ENCODE measurements at regions of chr7 and their contacts with region 1.

Region 1: DNA sequence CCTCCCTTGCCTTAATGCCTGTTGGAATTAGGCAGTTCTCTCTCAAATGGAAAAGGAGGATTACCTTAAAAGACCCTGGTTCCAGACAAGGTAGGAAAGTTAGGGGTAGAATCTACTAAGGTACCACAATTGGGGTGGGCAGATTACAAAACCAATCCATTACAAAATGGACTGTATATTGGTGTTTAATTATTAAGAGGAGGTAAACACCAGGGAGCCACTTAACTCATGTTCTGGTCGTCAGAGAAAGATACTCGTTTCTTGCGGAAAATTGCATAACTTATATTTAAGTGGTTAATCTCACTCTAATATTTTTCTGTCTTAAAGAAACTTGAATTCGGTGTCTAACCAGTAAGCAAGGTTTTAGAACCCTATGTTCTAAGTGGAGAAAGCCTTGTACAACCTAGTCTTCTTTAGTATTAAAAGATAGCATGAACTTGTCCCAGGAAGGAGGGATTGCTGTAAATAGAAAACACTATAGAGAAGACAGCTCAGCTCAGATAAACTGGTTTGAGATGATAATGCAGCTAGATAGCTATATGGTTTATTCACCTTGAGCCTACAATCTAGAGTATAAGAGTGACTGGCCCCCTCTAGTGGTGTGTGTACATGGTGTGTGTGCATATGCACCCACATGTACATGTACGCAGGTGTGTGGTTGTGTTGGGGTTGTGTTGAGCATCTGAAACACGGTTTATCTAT is 58.0 kb upstream of the STRIP2 start:
- DNase-seq: peak in 2 of 4 donors; percentile 15 to 38
- ATAC-seq: peak; percentile 77
- H3K4me3 ChIP-seq: no peak overlapping the region
- H3K27ac ChIP-seq: peak overlapping the region in 1 of 2 donors; percentile 60
- H3K4me1 ChIP-seq: peaks cover 0 to 16% of the 10 kb centered on the region in 2 donors
- H3K27me3 ChIP-seq: no peaks in the 10 kb centered on the region
- CTCF ChIP-seq: peak; percentile 43

Region 2: DNA sequence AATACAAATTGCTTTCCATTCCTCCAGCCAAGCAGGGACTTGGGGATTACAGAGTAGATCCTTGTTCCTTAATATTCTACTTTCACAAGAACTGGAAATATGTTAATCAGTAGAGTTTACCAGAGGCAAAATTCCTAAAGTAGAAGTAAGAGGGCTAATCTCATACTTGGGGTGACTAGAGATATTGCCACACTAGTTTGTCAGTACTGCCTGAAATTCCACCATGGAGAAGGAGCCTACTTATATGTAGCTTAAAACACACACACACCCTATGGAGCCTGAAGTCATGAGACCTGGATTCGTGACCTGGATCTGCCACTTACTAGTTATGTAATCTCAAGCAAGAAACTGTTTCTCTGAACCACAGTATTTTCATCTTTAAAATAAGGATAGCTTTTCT is 91.9 kb after region 1 on chr7:
- intact Hi-C with region 1: loop called in 1 of 2 experiments (anchors 10 kb)
- DNase-seq: peak in 2 of 4 donors; percentile 3 to 26
- ATAC-seq: peak; percentile 78
- H3K4me3 ChIP-seq: no peak overlapping the region
- H3K27ac ChIP-seq: peak overlapping the region; percentile 33 to 64
- H3K4me1 ChIP-seq: no peaks in the 10 kb centered on the region
- H3K27me3 ChIP-seq: no peaks in the 10 kb centered on the region
- CTCF ChIP-seq: no peak

Measured in left lung (tissue), 14 donors.